Activated naive CD4-positive, alpha-beta T cell treated with anti-CD3 and anti-CD28 coated beads, Interleukin-2, amount 10 ng/mL, durations not matched to agents 7 days and 5 days (primary cell): ENCODE measurements at regions of chr1 and their contacts with region 1.

Region 1: DNA sequence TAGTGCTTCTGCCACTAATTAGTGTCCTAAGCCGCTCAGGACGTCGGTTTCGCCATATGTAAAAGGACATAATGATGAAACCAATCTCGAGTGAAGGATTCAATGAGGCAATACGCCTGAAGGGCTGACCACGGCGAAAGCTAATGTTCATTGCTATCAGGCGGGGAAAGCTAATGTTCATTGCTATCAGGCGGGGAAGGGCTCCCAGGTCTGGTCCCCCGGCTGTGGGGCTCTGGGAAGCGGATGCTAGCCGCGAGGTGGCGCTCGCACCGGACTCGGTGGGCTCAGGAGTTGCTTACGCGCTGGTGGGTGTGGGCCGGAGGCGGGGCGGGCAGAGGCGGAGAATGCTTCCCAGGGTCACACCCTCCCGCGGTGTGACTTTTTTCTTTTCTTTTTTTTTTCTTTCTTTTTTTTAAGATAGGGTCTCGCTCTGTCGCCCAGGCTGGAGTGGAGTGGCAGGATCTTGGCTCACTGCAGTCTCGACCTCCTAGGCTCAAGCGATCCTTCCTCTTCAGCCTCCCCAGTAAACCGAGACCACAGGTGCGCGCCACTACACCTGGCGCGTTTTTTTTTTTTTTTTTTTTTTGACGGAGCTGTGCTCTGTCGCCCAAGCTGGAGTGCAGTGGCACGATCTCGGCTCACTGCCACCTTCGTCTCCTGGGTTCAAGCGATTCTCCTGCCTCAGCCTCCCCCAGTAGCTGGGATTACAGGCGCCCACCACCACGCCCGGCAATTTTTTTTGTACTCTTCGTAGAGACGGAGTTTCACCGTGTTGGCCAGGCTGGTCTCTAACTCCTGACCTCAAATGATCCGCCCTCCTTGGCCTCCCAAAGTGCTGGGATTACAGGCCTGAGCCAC is 1.1 kb upstream of the PEAR1 start:
- DNase-seq: peak; percentile 92
- H3K4me3 Mint-ChIP-seq: peak overlapping the region; percentile 59
- H3K27ac Mint-ChIP-seq: peak overlapping the region; percentile 66
- H3K4me1 Mint-ChIP-seq: peaks cover 27% of the 10 kb centered on the region
- H3K27me3 Mint-ChIP-seq: peaks cover 94% of the 10 kb centered on the region

Region 2: DNA sequence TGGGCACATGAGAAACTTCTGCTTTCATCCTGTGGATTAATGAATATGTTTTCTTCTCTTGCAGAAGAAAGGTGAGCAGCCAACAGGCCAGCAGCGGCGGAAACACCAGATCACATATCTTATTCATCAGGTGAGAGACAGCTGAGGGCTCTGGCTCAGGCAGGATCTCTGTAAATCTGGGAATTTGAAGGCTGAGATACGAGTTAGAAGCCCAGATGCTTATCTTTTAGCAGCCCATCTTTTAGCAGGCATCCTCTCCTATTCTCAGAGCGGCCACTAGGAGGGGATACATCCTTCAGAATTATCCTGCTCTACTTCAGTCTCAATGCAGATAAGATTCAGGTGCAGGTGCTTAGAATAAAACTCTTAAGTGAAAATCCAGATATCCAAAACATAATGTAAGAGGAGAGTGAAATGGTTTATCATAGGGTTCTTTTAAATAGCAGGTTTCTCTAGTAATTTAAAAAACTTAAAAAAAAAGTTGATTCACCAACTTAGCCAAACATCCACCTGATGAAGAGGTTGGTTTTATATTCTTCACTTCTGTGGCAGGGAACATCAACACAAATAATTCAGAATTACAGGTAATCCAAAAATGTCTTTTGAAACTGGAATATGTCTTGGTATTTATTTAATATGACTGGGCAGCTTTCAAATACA is 95.1 kb before region 1 on chr1:
- CTCF ChIA-PET with region 1: interaction called, 150 read pairs
- DNase-seq: peak; percentile 79
- H3K4me3 Mint-ChIP-seq: no peak overlapping the region
- H3K27ac Mint-ChIP-seq: no peak overlapping the region
- H3K4me1 Mint-ChIP-seq: peaks cover 9% of the 10 kb centered on the region
- H3K27me3 Mint-ChIP-seq: no peaks in the 10 kb centered on the region

Region 3: DNA sequence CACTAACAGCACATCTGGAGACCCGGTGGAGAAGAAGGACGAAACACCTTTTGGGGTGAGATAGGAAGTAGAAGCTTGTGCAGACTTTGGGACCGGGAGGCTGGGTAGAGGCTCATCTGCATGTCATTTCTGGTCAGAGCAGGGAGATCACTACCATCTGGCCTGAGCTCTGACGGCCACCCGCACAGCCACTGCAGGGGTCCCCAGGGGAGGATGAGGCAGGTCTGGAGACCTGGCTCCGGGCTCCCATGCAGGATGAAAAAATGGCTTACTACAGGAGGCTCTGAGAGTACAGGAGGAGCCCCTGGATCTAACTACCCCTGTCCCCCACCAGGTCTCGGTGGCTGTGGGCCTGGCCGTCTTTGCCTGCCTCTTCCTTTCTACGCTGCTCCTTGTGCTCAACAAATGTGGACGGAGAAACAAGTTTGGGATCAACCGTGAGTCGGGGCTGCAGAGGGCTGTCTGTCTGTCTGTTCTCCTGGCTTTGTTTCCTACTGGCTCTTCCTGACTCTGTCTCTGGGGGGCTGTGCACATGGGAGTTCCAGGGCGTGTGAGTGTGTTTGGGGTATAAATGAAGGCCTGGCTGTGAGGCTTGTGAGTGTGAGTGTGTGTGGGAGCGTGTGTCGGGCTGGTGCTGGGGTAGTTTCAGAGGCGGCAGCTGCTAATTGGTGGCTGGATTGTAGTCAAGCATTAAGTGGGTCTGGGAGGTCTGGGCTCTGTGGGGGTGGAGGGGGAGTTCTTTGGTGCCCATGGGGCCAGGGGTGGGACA is 17.7 kb before region 1 on chr1:
- CTCF ChIA-PET with region 1: interaction called, 11 read pairs
- DNase-seq: no peak
- H3K4me3 Mint-ChIP-seq: no peak overlapping the region
- H3K27ac Mint-ChIP-seq: no peak overlapping the region
- H3K4me1 Mint-ChIP-seq: peaks cover 5% of the 10 kb centered on the region
- H3K27me3 Mint-ChIP-seq: peaks cover 80% of the 10 kb centered on the region

Region 4: GRCh38 chr1:156927215-156928042 is 35.0 kb after region 1 on chr1:
- CTCF ChIA-PET with region 1: interaction called, 105 read pairs
- DNase-seq: peak; percentile 85
- H3K4me3 Mint-ChIP-seq: no peak overlapping the region
- H3K27ac Mint-ChIP-seq: no peak overlapping the region
- H3K4me1 Mint-ChIP-seq: peaks cover 22% of the 10 kb centered on the region
- H3K27me3 Mint-ChIP-seq: peaks cover 100% of the 10 kb centered on the region